PC-9 (cell line): ENCODE measurements at regions of chr10 and their contacts with region 1.

Region 1: GRCh38 chr10:9253108-9253507 is 1198.6 kb downstream of the GATA3 start:
- DNase-seq: no peak
- H3K4me3 ChIP-seq: no peak overlapping the region
- H3K27ac ChIP-seq: no peak overlapping the region
- H3K4me1 ChIP-seq: no peaks in the 10 kb centered on the region; the same call in 1 of the 2 replicates
- H3K27me3 ChIP-seq: no peaks in the 10 kb centered on the region
- CTCF ChIP-seq: no peak

Region 2: DNA sequence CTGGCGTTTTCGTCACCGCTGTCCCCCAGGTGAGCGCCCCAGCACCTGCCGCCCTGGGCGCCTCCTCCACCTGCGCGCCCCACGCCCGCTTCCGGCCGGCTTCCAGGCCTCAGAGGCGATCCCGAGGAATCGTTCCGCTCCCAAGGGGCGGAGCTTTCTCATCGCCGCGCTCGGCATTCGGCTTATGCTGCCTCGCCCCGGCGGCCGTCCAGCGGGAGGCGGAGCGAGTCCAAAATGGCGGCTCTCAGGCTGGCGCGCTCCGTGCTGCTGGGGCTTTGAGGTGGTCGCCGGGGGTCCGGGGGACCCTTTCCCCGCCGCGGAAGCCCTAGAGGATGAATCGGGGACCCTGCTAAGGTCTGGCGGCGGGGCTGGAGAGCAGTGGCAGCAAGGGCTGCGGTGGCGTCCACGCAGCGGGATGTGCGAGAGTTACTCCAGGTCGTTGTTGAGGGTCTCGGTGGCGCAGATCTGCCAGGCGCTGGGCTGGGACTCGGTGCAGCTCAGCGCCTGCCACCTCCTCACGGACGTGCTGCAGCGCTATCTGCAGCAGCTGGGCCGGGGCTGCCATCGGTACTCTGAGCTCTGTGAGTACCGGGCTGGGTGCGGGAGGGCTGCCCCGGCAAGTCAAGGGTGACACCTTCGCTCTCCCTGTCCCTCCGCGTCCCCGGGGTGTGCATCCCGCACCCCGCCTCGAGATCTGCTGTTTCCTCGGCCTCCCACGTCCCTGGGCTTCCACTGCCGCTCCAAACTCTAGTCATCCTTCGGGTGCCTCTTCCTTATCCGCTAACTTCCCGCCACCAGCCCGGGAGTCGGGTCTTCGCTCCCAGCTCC is 1434.6 kb before region 1 on chr10 and contains the start of gene TAF3:
- CTCF ChIA-PET with region 1: no interaction called
- POLR2A ChIA-PET with region 1: interaction called, 13 read pairs
- intact Hi-C with region 1: no loop called
- DNase-seq: peak; percentile 76 to 93
- H3K4me3 ChIP-seq: peak within 1 kb of the TSS; percentile 82
- H3K27ac ChIP-seq: peak within 1 kb of the TSS; percentile 78
- H3K4me1 ChIP-seq: peaks cover 14% of the 10 kb centered on the region; the same call in 1 of the 2 replicates
- H3K27me3 ChIP-seq: no peaks in the 10 kb centered on the region
- CTCF ChIP-seq: no peak
- total RNA-seq, gene TAF3: 7.2 and 7.7 TPM in 2 replicates

Region 3: DNA sequence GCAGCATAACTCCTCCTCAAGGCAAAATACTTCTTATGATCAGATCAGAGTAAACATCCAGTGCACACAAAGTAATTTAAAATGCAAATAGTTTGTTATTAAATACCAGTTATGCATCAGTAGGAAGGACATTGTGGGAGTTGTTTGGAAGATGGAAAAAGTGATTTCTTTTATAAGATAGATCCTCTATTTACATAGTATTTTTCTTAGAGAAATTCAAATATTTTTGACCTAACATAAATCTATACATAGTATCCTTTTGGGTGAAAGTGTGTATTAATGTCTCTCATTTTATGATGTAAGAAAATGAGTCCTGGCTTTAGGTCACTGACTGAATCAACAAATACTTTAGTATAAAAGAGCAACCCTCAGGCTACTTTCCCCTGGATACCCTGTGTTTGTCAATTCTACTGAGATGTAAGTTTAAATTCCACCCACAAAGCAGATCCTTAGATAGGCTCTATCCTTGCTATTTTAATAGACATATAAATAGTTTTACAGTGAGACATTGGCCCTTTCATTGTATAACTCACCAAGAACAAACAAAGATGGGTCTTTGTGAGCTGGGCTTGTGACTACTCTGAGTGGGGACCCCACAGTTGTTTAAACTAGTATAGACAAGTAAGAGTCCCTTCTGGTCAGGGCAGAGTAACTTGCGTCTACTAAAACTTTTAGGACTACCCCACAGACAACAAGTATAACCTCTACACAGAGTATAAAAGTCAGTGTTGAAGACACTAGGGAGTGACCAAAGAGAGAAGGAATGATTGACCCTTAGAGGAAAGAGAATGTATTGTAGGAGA is 64.8 kb before region 1 on chr10:
- CTCF ChIA-PET with region 1: no interaction called
- POLR2A ChIA-PET with region 1: no interaction called
- intact Hi-C with region 1: no loop called
- DNase-seq: peak in 1 of 2 experiments; percentile 83
- H3K4me3 ChIP-seq: no peak overlapping the region
- H3K27ac ChIP-seq: peak overlapping the region; percentile 40
- H3K4me1 ChIP-seq: 0 out of 2 replicates have a peak, but pooled peaks cover 11% of the 10 kb centered on the region
- H3K27me3 ChIP-seq: no peaks in the 10 kb centered on the region
- CTCF ChIP-seq: no peak

Region 4: GRCh38 chr10:9381733-9382532 is 128.8 kb after region 1 on chr10:
- CTCF ChIA-PET with region 1: no interaction called
- POLR2A ChIA-PET with region 1: no interaction called
- intact Hi-C with region 1: no loop called
- DNase-seq: no peak
- H3K4me3 ChIP-seq: no peak overlapping the region
- H3K27ac ChIP-seq: no peak overlapping the region
- H3K4me1 ChIP-seq: no peaks in the 10 kb centered on the region
- H3K27me3 ChIP-seq: no peaks in the 10 kb centered on the region
- CTCF ChIP-seq: no peak

Region 5: DNA sequence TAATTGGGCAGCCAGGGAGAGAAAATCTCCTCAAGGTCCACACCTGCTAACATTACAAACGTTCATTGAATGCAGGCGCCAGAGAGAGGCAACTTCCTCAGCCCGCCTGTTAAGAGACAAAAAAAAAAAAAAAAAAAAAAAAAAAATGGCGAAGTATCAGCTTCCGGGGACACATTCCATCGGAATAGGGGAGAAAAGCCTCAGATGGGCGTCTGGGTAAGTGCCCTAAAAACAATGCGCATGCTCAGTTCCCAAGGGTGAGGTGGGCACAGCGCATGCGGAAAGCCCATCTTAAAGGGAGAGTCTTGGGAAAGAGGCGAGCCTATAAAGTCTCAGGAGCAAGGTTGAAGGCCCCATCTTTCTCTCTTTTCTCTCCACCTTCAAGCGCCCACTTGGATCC is 624.9 kb after region 1 on chr10:
- CTCF ChIA-PET with region 1: no interaction called
- POLR2A ChIA-PET with region 1: no interaction called
- intact Hi-C with region 1: no loop called
- DNase-seq: no peak
- H3K4me3 ChIP-seq: no peak overlapping the region
- H3K27ac ChIP-seq: no peak overlapping the region
- H3K4me1 ChIP-seq: no peaks in the 10 kb centered on the region
- H3K27me3 ChIP-seq: no peaks in the 10 kb centered on the region
- CTCF ChIP-seq: no peak